Naive thymus-derived CD4-positive, alpha-beta T cell (primary cell): ENCODE measurements at regions of chr19 and their contacts with region 1.

Region 1: GRCh38 chr19:14073261-14073924 is 807 bp downstream of the MISP3 start:
- DNase-seq: peak; percentile 65 to 91 (median 87)
- ATAC-seq: peak; percentile 86
- H3K4me3 ChIP-seq: peak overlapping the region; percentile 91
- H3K4me3 Mint-ChIP-seq: peak overlapping the region; percentile 87 to 99 (median 93)
- H3K27ac ChIP-seq: peak overlapping the region; percentile 50
- H3K27ac Mint-ChIP-seq: peak overlapping the region in 7 of 9 donors; percentile 62 to 89 (median 78)
- H3K4me1 ChIP-seq: peaks cover 9 to 18% of the 10 kb centered on the region in 2 donors
- H3K4me1 Mint-ChIP-seq: peaks cover 7 to 24% (median 10%) of the 10 kb centered on the region in 7 donors
- H3K27me3 ChIP-seq: no peaks in the 10 kb centered on the region
- H3K27me3 Mint-ChIP-seq: peaks cover 0 to 10% (median 0%) of the 10 kb centered on the region in 5 donors

Region 2: GRCh38 chr19:13597640-13598039 is 475.8 kb before region 1 on chr19:
- CTCF ChIA-PET with region 1: no interaction called
- POLR2A ChIA-PET with region 1: no interaction called
- intact Hi-C with region 1: loop called in 1 of 2 experiments (anchors 2 kb)
- DNase-seq: peak in 8 of 9 donors; percentile 10 to 54 (median 34)
- ATAC-seq: peak; percentile 73
- H3K4me3 ChIP-seq: no peak overlapping the region
- H3K4me3 Mint-ChIP-seq: no peak overlapping the region
- H3K27ac ChIP-seq: no peak overlapping the region
- H3K27ac Mint-ChIP-seq: no peak overlapping the region
- H3K4me1 ChIP-seq: no peaks in the 10 kb centered on the region
- H3K4me1 Mint-ChIP-seq: peaks cover 0 to 4% (median 0%) of the 10 kb centered on the region in 7 donors
- H3K27me3 ChIP-seq: peaks cover 0 to 4% of the 10 kb centered on the region in 2 donors
- H3K27me3 Mint-ChIP-seq: peaks cover 4 to 32% (median 31%) of the 10 kb centered on the region in 5 donors

Region 3: GRCh38 chr19:13952154-13953035 is 121.0 kb before region 1 on chr19 and contains the start of gene DCAF15:
- CTCF ChIA-PET with region 1: no interaction called
- POLR2A ChIA-PET with region 1: interaction called, 3 read pairs
- intact Hi-C with region 1: loop called (anchors 1 to 2 kb)
- DNase-seq: peak; percentile 89 to 99 (median 99)
- ATAC-seq: peak; percentile 98
- H3K4me3 ChIP-seq: peak within 1 kb of the TSS; percentile 75
- H3K4me3 Mint-ChIP-seq: peak within 1 kb of the TSS; percentile 74 to 99 (median 93)
- H3K27ac ChIP-seq: peak within 1 kb of the TSS; percentile 90
- H3K27ac Mint-ChIP-seq: peak within 1 kb of the TSS; percentile 86 to 99 (median 91)
- H3K4me1 ChIP-seq: peaks cover 13 to 17% of the 10 kb centered on the region in 2 donors
- H3K4me1 Mint-ChIP-seq: peaks cover 5 to 24% (median 19%) of the 10 kb centered on the region in 7 donors
- H3K27me3 ChIP-seq: no peaks in the 10 kb centered on the region
- H3K27me3 Mint-ChIP-seq: no peaks in the 10 kb centered on the region
- total RNA-seq, gene DCAF15: 68.5 to 92.0 (median 87.2) TPM

Region 4: GRCh38 chr19:14059093-14059480 is 14.3 kb before region 1 on chr19:
- CTCF ChIA-PET with region 1: interaction called, 22 read pairs
- POLR2A ChIA-PET with region 1: no interaction called
- intact Hi-C with region 1: loop called in 1 of 2 experiments (anchors 1 kb)
- DNase-seq: peak in 5 of 9 donors; percentile 30 to 66 (median 46)
- ATAC-seq: peak; percentile 68
- H3K4me3 ChIP-seq: no peak overlapping the region
- H3K4me3 Mint-ChIP-seq: peak overlapping the region in 9 of 10 donors; percentile 19 to 81 (median 55)
- H3K27ac ChIP-seq: no peak overlapping the region
- H3K27ac Mint-ChIP-seq: no peak overlapping the region
- H3K4me1 ChIP-seq: peaks cover 9 to 10% of the 10 kb centered on the region in 2 donors
- H3K4me1 Mint-ChIP-seq: peaks cover 9 to 26% (median 19%) of the 10 kb centered on the region in 7 donors
- H3K27me3 ChIP-seq: peaks cover 5 to 21% of the 10 kb centered on the region in 2 donors
- H3K27me3 Mint-ChIP-seq: peaks cover 16 to 48% (median 27%) of the 10 kb centered on the region in 5 donors

Region 5: GRCh38 chr19:14300303-14300702 is 226.9 kb after region 1 on chr19:
- CTCF ChIA-PET with region 1: no interaction called
- POLR2A ChIA-PET with region 1: no interaction called
- intact Hi-C with region 1: no loop called
- DNase-seq: no peak
- ATAC-seq: no peak
- H3K4me3 ChIP-seq: no peak overlapping the region
- H3K4me3 Mint-ChIP-seq: no peak overlapping the region
- H3K27ac ChIP-seq: no peak overlapping the region
- H3K27ac Mint-ChIP-seq: no peak overlapping the region
- H3K4me1 ChIP-seq: no peaks in the 10 kb centered on the region
- H3K4me1 Mint-ChIP-seq: peaks cover 0 to 9% (median 0%) of the 10 kb centered on the region in 7 donors
- H3K27me3 ChIP-seq: no peaks in the 10 kb centered on the region
- H3K27me3 Mint-ChIP-seq: peaks cover 0 to 15% (median 0%) of the 10 kb centered on the region in 5 donors

Region 6: DNA sequence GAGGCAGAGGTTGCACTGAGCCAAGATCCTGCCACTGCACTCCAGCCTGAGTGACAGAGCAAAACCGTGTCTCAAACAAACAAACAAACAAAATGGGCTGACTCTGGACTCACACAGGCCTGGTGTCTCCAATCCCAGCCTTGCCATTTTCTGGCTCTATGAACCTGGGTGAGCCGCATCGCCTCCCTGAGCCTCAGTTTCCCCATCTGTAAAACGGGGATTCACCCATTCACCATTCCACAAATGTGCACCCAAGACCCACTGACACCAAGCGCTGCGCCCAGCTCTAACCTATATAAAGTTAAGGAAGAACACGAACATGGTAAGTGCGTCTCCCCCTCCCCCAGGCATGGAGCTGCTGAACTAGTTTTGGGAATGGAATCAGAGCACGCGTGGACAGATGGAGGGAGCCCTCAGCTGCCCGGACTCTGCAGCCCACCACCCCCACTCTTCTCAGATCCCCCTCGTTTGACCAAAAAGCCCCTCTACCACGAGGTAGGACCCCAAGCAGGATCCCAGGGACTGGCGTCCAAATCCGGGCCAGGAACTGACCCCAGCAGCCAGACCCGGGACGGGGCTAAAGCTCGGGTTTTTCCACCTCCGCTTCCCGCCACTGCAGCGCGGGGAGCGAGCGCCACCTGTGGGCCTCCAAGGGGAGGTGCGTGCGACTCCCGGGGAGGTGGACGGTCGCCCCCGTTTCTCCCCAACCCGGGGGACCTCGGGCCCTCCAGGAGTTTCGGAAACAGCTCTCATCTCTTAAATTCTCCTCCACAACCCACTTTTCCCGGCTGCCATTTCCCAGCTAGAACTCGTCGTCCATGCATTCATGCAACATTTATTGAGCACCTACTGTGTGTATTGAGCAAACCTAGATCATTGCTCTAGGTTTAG is 274.9 kb after region 1 on chr19:
- CTCF ChIA-PET with region 1: no interaction called
- POLR2A ChIA-PET with region 1: no interaction called
- intact Hi-C with region 1: loop called in 1 of 2 experiments (anchors 2 kb)
- DNase-seq: peak; percentile 43 to 81 (median 59)
- ATAC-seq: peak; percentile 84
- H3K4me3 ChIP-seq: no peak overlapping the region
- H3K4me3 Mint-ChIP-seq: peak overlapping the region; percentile 19 to 82 (median 66)
- H3K27ac ChIP-seq: peak overlapping the region; percentile 38
- H3K27ac Mint-ChIP-seq: peak overlapping the region in 4 of 9 donors; percentile 51 to 80 (median 64)
- H3K4me1 ChIP-seq: peaks cover 8 to 12% of the 10 kb centered on the region in 2 donors
- H3K4me1 Mint-ChIP-seq: peaks cover 9 to 25% (median 19%) of the 10 kb centered on the region in 7 donors
- H3K27me3 ChIP-seq: no peaks in the 10 kb centered on the region
- H3K27me3 Mint-ChIP-seq: no peaks in the 10 kb centered on the region